ENCODE measurements at regions of chr2 and their contacts with region 1.

Region 1: DNA sequence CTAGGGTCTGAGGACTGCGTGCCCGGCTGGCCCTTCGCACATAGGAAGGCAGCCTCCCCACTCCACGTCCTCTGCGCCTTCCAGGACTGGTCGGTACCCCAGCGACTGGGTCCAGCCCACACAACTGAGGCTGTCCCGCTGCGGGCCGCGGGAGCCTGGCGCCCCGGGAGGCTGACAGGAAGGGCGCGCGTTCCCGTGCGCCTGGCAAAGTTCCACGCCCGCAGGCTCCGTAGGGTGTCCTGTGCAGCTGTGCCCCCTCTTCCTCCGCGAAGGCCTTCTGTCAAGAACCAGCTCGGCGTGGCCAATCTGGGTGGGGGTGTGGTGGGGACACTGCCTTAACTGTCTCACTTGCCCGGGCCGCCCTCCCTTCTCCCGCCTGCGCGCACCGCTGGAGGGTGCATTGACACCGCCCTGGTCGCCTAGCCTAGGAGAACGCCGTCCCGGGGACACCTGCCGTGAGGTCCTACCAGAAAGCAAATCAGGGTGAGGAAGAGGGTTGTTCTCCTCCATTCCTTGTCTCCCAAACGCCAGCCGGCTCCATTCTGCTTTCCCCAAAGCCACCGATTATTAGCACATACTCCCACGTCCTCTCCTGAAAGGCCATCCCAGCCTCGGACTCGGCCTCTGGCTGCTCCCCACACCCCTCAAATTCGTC is 618 bp upstream of the LYPD1 start:
- DNase-seq: no peak
- H3K4me3 Mint-ChIP-seq: no peak overlapping the region
- H3K27ac Mint-ChIP-seq: no peak overlapping the region
- H3K4me1 Mint-ChIP-seq: no peaks in the 10 kb centered on the region
- H3K27me3 Mint-ChIP-seq: peaks cover 20% of the 10 kb centered on the region

Region 2: GRCh38 chr2:131641414-131642206 is 1029.0 kb before region 1 on chr2:
- intact Hi-C with region 1: no loop called
- DNase-seq: no peak
- H3K4me3 Mint-ChIP-seq: no peak overlapping the region
- H3K27ac Mint-ChIP-seq: no peak overlapping the region
- H3K4me1 Mint-ChIP-seq: no peaks in the 10 kb centered on the region
- H3K27me3 Mint-ChIP-seq: peaks cover 39% of the 10 kb centered on the region

Region 3: DNA sequence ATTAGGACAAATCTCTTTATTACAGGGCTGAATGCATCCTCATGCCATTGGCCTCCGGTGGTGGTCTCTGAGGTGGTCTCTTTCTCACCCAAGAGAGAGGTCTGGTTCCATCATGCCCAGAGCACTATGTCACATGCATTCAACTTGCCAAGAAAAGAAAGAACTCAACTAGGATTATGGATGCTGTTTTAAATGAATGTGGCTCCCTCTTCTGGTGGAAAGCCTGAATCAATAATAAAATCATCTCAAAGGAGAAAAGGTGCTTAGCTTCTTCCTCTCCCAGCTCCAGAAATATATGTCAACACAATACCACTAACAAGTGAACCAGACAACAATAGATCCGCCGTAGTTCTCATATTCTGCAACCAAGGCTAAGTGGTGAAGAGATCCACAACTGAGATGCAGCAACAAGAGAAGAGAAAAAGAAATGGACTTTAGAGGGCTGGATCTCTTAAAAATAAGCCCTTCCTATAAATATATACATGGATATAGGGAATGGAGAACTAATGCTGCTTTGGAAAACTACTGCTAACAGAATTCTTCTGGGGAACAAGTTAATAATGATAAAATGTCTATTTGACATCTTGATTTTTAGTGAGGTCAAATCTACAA is 500.9 kb after region 1 on chr2:
- intact Hi-C with region 1: loop called (anchors 10 kb)
- DNase-seq: no peak
- H3K4me3 Mint-ChIP-seq: no peak overlapping the region
- H3K27ac Mint-ChIP-seq: no peak overlapping the region
- H3K4me1 Mint-ChIP-seq: no peaks in the 10 kb centered on the region
- H3K27me3 Mint-ChIP-seq: no peaks in the 10 kb centered on the region